HepG2 (cell line): ENCODE measurements at regions of chr2 and their contacts with region 1.

Region 1: GRCh38 chr2:240873805-240874714 is 5.4 kb downstream of the AGXT start:
- DNase-seq: peak; percentile 92
- ATAC-seq: peak; percentile 87
- H3K4me3 ChIP-seq: peak overlapping the region in 1 of 3 experiments; percentile 39; a peak in 2 of 6 replicates
- H3K27ac ChIP-seq: peak overlapping the region; percentile 88
- H3K4me1 ChIP-seq: peaks cover 88% of the 10 kb centered on the region
- H3K27me3 ChIP-seq: no peaks in the 10 kb centered on the region
- CTCF ChIP-seq: peak; percentile 74
- EP300 ChIP-seq: peak; percentile 48 to 80; a peak in 3 of 4 replicates
- POLR2A ChIP-seq: peak in 1 of 2 experiments; percentile 72; a peak in 2 of 4 replicates
- RAD21 ChIP-seq: peak; percentile 90

Region 2: GRCh38 chr2:240861554-240861953 is 12.5 kb before region 1 on chr2:
- CTCF ChIA-PET with region 1: interaction called, 13 read pairs
- POLR2A ChIA-PET with region 1: interaction called, 83 read pairs
- in situ Hi-C with region 1: no loop called
- intact Hi-C with region 1: loop called (anchors 1 kb)
- DNase-seq: no peak
- ATAC-seq: no peak
- H3K4me3 ChIP-seq: no peak overlapping the region
- H3K27ac ChIP-seq: no peak overlapping the region
- H3K4me1 ChIP-seq: peaks cover 80% of the 10 kb centered on the region
- H3K27me3 ChIP-seq: peaks cover 0 to 2% of the 10 kb centered on the region in 2 experiments; a peak in 1 of 5 replicates
- CTCF ChIP-seq: no peak
- EP300 ChIP-seq: no peak
- POLR2A ChIP-seq: no peak
- RAD21 ChIP-seq: no peak

Region 3: GRCh38 chr2:240893363-240893844 is 19.3 kb after region 1 on chr2:
- CTCF ChIA-PET with region 1: no interaction called
- POLR2A ChIA-PET with region 1: interaction called, 63 read pairs
- in situ Hi-C with region 1: no loop called
- intact Hi-C with region 1: no loop called
- DNase-seq: no peak
- ATAC-seq: no peak
- H3K4me3 ChIP-seq: no peak overlapping the region; a peak in 1 of 6 replicates
- H3K27ac ChIP-seq: no peak overlapping the region
- H3K4me1 ChIP-seq: peaks cover 89% of the 10 kb centered on the region
- H3K27me3 ChIP-seq: no peaks in the 10 kb centered on the region; a peak in 1 of 5 replicates
- CTCF ChIP-seq: peak; percentile 17; the same call in 1 of the 2 replicates
- EP300 ChIP-seq: no peak
- POLR2A ChIP-seq: no peak
- RAD21 ChIP-seq: no peak